Thyroid gland (tissue), 4 donors: ENCODE measurements at regions of chr14 and their contacts with region 1.

Region 1: DNA sequence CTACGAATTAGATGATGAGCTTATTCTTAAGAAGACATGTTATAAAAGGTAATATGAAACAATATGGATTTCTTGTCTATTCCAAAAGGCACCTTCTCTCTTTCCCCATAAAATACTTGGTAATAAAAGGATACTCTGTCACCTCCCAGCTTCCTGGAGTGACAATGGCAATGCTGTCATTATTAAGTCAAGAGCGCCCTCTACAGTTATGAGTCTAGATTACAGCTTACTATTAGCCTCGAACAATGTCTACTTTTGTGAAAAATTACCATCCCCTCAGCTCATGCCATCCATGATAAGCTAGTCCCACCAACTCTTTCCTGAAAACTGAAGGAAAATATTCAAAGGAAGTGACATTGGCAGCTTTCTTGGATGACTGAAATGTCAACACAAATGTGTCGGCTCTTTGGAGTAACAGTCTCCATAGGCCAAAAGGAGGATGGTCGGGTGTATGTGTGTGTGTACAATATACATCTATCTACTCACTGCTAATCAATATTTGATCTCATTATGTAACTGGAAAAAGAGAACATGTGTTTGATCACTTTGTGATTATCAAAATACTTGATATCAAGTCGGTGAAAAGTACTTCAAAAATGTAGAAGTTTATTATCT is 48.7 kb upstream of the CDKN3 start:
- DNase-seq: no peak
- H3K4me3 ChIP-seq: no peak overlapping the region
- H3K27ac ChIP-seq: no peak overlapping the region
- H3K4me1 ChIP-seq: no peaks in the 10 kb centered on the region
- H3K27me3 ChIP-seq: no peaks in the 10 kb centered on the region
- CTCF ChIP-seq: peak; percentile 49 to 93 (median 77)
- POLR2A ChIP-seq: no peak

Region 2: DNA sequence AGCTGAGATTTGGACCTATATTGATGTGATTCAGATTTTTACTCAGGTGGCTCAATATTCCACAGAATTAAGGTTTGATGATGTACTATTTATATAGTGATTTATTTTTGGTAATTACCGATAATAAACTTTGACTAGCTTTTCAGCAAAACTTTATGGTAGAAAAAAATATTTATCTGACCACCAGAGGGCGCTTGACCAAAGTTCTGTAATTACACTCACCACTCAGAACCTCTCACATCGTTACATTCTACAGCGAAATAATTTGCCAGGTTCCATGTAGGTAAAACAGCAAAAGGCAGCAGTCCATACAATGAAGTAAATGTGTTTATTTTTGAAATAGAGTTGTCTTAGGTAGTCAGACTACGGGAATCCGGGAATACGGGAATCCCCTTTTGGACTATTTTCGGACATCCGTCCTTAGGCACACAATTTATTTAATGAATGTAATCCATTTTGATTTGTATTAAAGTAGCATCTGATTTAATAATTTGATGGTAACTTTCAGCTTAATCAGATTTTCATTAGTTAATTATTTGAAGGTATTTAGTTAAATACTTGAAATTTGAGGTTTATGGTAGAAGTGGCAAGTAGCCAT is 1052.0 kb before region 1 on chr14:
- intact Hi-C with region 1: loop called (anchors 5 kb)
- DNase-seq: no peak
- H3K4me3 ChIP-seq: no peak overlapping the region
- H3K27ac ChIP-seq: no peak overlapping the region
- H3K4me1 ChIP-seq: peaks cover 0 to 7% of the 10 kb centered on the region in 2 donors
- H3K27me3 ChIP-seq: no peaks in the 10 kb centered on the region
- CTCF ChIP-seq: peak; percentile 24 to 79 (median 68)
- POLR2A ChIP-seq: no peak

Region 3: DNA sequence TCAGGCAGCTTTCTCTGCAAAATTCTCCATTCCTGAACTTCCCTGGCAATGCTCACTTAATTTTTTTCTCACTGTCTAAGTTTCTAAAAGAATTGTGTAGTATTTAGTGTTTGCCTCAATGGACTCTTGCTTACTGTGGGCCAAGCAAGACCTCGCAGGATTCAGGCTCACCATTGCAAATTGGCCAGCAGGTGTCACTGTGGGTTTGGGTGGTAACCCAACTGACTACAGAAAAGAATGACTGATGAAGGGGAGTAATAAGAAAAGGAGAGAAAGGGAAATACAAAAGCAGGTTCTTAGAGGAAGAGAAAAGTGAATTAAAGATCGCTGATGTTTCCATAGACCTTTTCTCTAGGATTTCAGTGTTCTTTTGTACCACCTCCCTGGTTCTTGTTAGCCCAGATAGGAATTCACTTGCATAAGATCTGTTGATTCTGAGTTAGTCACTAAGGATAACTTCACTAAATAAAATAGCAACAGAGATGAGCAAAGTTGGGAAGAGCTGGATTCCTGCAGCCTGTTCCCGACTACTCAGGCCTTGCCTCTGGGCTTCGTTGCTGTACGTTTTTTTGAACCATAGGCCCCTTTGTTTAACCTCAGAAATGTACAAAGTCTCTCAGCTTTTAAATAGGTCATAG is 808.5 kb before region 1 on chr14:
- intact Hi-C with region 1: loop called (anchors 5 kb)
- DNase-seq: peak; percentile 75 to 87
- H3K4me3 ChIP-seq: no peak overlapping the region
- H3K27ac ChIP-seq: no peak overlapping the region
- H3K4me1 ChIP-seq: peaks cover 9 to 16% of the 10 kb centered on the region in 2 donors
- H3K27me3 ChIP-seq: no peaks in the 10 kb centered on the region
- CTCF ChIP-seq: peak; percentile 66 to 87 (median 81)
- POLR2A ChIP-seq: no peak

Region 4: GRCh38 chr14:53953002-53953827 is 394.9 kb before region 1 on chr14:
- intact Hi-C with region 1: loop called (anchors 10 kb)
- DNase-seq: peak; percentile 90 to 91
- H3K4me3 ChIP-seq: peak overlapping the region; percentile 42 to 68 (median 67)
- H3K27ac ChIP-seq: peak overlapping the region; percentile 46 to 80 (median 75)
- H3K4me1 ChIP-seq: peaks cover 21 to 30% of the 10 kb centered on the region in 2 donors
- H3K27me3 ChIP-seq: no peaks in the 10 kb centered on the region
- CTCF ChIP-seq: no peak
- POLR2A ChIP-seq: peak; percentile 51 to 84